Left ventricle myocardium inferior (tissue), 1 donor: ENCODE measurements at regions of chr3 and their contacts with region 1.

Region 1: GRCh38 chr3:194472290-194472920 is 14.4 kb downstream of the ATP13A3 start:
- DNase-seq: no peak
- H3K4me3 ChIP-seq: no peak overlapping the region
- H3K27ac ChIP-seq: no peak overlapping the region
- H3K4me1 ChIP-seq: peaks cover 60% of the 10 kb centered on the region
- H3K27me3 ChIP-seq: no peaks in the 10 kb centered on the region
- CTCF ChIP-seq: peak; percentile 98

Region 2: DNA sequence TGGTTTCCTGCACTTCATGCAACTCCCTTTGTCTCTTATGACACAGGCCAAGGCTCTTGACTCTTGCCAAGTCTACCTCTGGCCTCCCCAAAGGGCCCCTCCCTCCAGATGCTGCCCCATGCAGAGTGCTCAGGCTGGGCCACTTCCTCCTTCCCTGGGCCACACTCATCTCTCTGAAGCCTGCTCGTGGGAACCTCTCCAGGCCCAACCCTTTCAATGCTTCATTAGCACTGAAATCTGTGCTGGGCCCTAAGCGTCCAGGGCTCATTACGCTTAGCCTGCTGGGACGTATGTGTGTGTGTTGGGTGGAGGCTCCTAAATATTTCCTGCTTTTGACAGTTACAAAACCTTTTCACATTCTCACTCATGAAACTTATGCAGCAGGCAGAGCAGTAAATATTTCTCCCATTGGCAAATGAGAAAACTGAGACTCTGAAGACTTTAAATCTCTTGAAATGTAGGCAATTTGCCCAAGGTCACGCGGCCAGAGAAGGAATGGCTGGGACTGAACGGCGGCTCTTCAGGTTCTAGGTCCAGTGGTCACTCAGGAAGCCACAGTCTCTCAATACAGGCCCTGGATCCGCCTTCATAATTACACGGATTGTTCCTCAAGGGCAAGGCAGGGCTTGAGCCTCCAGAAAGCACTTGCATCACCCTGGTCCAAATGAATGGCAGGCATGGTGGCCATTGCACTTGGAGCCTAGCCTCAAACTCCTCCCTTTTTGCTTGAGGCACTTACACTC is 578.1 kb before region 1 on chr3:
- intact Hi-C with region 1: no loop called
- DNase-seq: peak; percentile 29
- H3K4me3 ChIP-seq: no peak overlapping the region
- H3K27ac ChIP-seq: peak overlapping the region; percentile 64
- H3K4me1 ChIP-seq: peaks cover 18% of the 10 kb centered on the region
- H3K27me3 ChIP-seq: no peaks in the 10 kb centered on the region
- CTCF ChIP-seq: no peak

Region 3: DNA sequence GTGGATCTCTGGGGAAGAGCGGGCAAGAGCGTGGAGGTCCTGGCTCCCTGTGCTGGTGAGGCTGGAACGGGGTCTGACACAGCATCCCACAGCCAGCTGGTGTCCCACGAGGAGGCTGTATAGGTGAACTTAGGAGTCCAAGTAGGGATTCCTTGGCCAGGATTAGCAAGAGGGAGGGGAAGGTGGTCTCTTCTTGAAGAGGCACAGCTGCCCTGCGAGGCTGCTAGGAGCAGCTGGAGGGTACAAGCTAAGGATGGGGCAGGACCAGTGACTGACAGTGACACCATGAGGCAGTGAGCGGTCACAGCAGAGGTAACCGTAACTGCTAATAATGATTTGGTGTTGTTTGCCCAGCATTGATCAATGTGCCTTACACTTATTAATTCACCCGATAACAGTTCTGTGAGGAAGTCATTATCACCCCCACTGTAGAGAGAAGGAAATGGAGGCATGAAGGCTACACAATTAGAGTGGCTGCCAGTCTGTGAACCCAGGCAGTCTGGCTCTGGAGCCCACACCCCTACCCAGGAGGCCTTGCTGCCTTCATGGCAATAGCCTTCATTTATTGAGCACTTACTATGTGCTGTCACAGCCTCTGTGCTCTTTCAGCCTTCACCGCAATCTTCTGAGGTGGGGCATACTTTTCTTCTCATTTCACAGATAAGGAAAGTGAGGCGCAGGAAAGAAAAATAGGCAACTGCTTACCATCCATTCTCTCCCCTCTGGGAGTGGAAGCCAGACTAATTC is 101.5 kb after region 1 on chr3:
- intact Hi-C with region 1: loop called (anchors 5 kb)
- DNase-seq: no peak
- H3K4me3 ChIP-seq: no peak overlapping the region
- H3K27ac ChIP-seq: peak overlapping the region; percentile 88
- H3K4me1 ChIP-seq: peaks cover 58% of the 10 kb centered on the region
- H3K27me3 ChIP-seq: no peaks in the 10 kb centered on the region
- CTCF ChIP-seq: peak; percentile 72

Region 4: GRCh38 chr3:194592798-194593752 is 120.7 kb after region 1 on chr3:
- intact Hi-C with region 1: loop called (anchors 5 kb)
- DNase-seq: no peak
- H3K4me3 ChIP-seq: no peak overlapping the region
- H3K27ac ChIP-seq: no peak overlapping the region
- H3K4me1 ChIP-seq: peaks cover 5% of the 10 kb centered on the region
- H3K27me3 ChIP-seq: no peaks in the 10 kb centered on the region
- CTCF ChIP-seq: no peak

Region 5: GRCh38 chr3:194654443-194654842 is 182.0 kb after region 1 on chr3:
- intact Hi-C with region 1: no loop called
- DNase-seq: no peak
- H3K4me3 ChIP-seq: no peak overlapping the region
- H3K27ac ChIP-seq: no peak overlapping the region
- H3K4me1 ChIP-seq: peaks cover 5% of the 10 kb centered on the region
- H3K27me3 ChIP-seq: no peaks in the 10 kb centered on the region
- CTCF ChIP-seq: no peak